ENCODE measurements at regions of chr11 and their contacts with region 1.

Region 1: GRCh38 chr11:36421546-36422155 is 88.4 kb downstream of the TRAF6 start:
- DNase-seq: no peak
- H3K4me3 Mint-ChIP-seq: peak overlapping the region; percentile 34
- H3K27ac Mint-ChIP-seq: peak overlapping the region; percentile 80
- H3K4me1 Mint-ChIP-seq: peaks cover 64% of the 10 kb centered on the region
- H3K27me3 Mint-ChIP-seq: no peaks in the 10 kb centered on the region

Region 2: DNA sequence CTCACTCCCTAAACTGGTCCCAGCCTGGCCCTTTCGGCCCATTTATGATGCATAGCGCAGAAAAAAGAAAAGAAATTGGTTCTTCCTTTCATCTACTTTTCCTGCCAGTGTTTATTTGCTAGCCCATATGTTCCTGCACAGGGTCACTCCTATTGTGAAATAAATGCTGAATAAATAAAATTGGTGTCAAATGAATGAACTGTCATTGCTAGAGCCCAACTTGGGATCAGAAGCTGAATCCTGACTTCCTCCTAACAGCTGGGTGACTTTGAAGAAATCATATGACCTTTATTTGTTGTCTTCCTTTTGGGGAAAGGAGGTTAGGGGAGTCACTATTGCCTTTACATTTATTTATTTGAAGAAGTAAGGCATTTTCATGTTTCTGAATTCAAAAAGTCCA is 33.6 kb before region 1 on chr11:
- CTCF ChIA-PET with region 1: no interaction called
- POLR2A ChIA-PET with region 1: no interaction called
- DNase-seq: no peak
- H3K4me3 Mint-ChIP-seq: no peak overlapping the region
- H3K27ac Mint-ChIP-seq: no peak overlapping the region
- H3K4me1 Mint-ChIP-seq: peaks cover 86% of the 10 kb centered on the region
- H3K27me3 Mint-ChIP-seq: no peaks in the 10 kb centered on the region

Region 3: GRCh38 chr11:36411202-36411640 is 10.4 kb before region 1 on chr11:
- CTCF ChIA-PET with region 1: interaction called, 3 read pairs
- POLR2A ChIA-PET with region 1: interaction called, 22 read pairs
- DNase-seq: peak; percentile 38
- H3K4me3 Mint-ChIP-seq: peak overlapping the region; percentile 32
- H3K27ac Mint-ChIP-seq: peak overlapping the region; percentile 87
- H3K4me1 Mint-ChIP-seq: peaks cover 69% of the 10 kb centered on the region
- H3K27me3 Mint-ChIP-seq: no peaks in the 10 kb centered on the region